Psoas muscle (tissue), 8 donors: ENCODE measurements at regions of chr6 and their contacts with region 1.

Region 1: DNA sequence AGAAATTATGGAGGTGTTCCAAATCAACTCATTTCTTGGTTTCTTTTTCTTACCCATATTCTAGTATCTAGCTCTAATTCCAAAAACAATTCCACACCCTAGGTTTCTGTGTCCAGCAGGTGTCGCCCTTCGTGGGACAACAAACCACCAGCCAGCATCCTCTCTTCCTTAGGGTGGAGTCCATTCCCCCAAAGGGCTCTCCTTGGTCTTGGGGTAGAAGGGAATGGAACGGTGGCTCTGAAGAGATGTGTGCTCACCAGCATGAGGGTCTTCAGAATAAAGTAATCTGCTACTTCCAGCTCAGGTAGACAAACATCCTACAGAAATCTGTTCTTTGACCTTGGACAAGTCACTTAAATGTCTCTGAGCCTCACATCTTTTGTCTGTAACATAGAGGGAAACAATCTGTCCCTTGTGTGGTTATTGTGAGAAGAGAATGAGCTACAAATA is 7.2 kb downstream of the HLA-DMB start:
- DNase-seq: peak; percentile 77 to 85
- ATAC-seq: peak; percentile 72 to 89 (median 80)
- H3K4me3 ChIP-seq: no peak overlapping the region
- H3K27ac ChIP-seq: no peak overlapping the region
- H3K4me1 ChIP-seq: no peaks in the 10 kb centered on the region
- H3K27me3 ChIP-seq: no peaks in the 10 kb centered on the region
- CTCF ChIP-seq: peak; percentile 88

Region 2: GRCh38 chr6:32971581-32972352 is 38.1 kb after region 1 on chr6:
- intact Hi-C with region 1: loop called in 1 of 2 experiments (anchors 5 kb)
- DNase-seq: peak; percentile 99 to 100
- ATAC-seq: peak; percentile 54 to 65 (median 60)
- H3K4me3 ChIP-seq: peak overlapping the region; percentile 79
- H3K27ac ChIP-seq: peak overlapping the region; percentile 100
- H3K4me1 ChIP-seq: peaks cover 25% of the 10 kb centered on the region
- H3K27me3 ChIP-seq: no peaks in the 10 kb centered on the region
- CTCF ChIP-seq: no peak

Region 3: GRCh38 chr6:32984605-32985389 is 51.1 kb after region 1 on chr6:
- intact Hi-C with region 1: loop called (anchors 1 to 2 kb)
- DNase-seq: peak; percentile 89 to 93
- ATAC-seq: peak; percentile 79 to 85 (median 84)
- H3K4me3 ChIP-seq: no peak overlapping the region
- H3K27ac ChIP-seq: peak overlapping the region; percentile 48
- H3K4me1 ChIP-seq: peaks cover 10% of the 10 kb centered on the region
- H3K27me3 ChIP-seq: no peaks in the 10 kb centered on the region
- CTCF ChIP-seq: peak; percentile 92